Ascending aorta (tissue), 2 donors: ENCODE measurements at regions of chr9 and their contacts with region 1.

Region 1: DNA sequence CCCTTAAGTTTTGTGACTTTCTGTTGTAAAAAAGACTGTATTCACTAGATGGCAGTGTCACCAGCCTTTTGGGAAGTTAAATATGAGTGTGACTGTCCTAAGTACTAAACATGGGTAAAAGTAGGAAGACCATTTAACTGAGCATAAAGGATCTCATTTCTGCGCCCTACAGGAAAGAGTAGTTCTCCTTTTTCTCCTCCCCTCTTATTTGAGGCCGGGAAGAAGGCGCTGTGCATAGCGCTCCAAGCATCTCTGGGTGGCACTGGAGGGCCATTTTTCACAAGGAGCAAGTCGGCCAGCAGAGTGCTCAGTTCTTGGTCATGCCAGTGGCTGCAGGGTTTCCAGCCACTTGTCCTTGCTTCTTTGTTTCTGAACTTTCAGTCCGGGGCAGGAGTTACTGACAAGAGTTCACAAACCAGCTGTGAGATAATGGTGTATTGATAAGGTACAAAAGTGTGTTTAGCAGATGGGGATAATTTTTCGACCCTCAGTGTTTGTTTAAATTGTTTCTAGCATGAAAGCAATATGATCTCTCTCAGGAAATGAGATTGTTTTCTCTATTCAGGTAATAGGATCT is 227.6 kb upstream of the DMRT1 start:
- DNase-seq: peak; percentile 55 to 94
- H3K4me3 ChIP-seq: no peak overlapping the region
- H3K27ac ChIP-seq: peak overlapping the region; percentile 86 to 88
- H3K4me1 ChIP-seq: peaks cover 10 to 25% of the 10 kb centered on the region in 2 donors
- H3K27me3 ChIP-seq: no peaks in the 10 kb centered on the region
- CTCF ChIP-seq: peak; percentile 79 to 88 (median 82)

Region 2: DNA sequence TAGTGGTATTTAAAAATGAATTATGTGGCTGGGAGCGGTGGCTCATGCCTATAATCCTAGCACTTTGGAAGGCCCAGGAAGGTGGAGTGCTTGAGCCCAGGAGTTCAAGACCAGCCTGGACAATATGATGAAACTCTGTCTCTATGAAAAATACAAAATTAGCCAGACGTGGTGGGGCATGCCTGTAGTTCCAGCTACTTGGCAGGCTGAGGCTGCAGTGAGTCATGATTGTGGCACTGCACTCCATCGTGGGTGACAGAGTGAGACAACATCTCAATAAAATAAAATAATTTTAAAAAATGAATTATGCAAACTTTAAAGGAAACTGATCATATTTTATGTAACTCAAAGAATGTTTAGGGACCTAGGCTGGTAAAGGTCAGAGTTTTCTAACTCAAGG is 83.2 kb before region 1 on chr9:
- intact Hi-C with region 1: loop called (anchors 5 kb)
- DNase-seq: peak; percentile 37 to 81
- H3K4me3 ChIP-seq: no peak overlapping the region
- H3K27ac ChIP-seq: peak overlapping the region; percentile 67 to 75
- H3K4me1 ChIP-seq: peaks cover 0 to 34% of the 10 kb centered on the region in 2 donors
- H3K27me3 ChIP-seq: no peaks in the 10 kb centered on the region
- CTCF ChIP-seq: no peak

Region 3: DNA sequence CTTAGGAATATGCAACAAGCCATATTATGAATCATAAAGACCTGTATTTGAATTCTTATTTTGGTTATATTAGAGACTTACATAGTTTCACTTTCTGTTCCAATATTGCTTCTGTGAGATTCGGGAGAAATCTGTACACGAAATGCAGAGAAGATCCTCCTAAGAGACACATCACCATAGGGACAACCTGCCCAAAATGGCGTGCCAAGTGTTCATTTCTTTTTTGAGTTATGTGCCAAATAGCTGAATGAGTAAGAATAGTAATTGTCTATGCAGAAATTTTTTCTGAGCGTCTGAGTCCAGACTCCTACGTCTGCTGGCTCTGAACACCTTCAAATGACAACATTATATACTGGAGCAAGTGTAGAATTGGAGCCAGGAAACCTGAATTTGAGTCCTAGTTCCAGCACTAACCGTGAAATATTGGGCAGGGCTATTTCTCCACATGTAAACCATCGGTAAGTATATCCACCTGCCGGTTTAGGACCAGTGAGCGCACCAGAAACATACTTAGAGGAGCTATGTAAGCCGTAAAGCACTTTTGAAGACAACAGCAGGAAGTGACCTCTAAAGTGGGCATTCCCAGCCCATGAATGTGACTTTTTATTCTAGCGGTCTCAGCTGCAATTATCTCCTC is 63.7 kb after region 1 on chr9:
- intact Hi-C with region 1: no loop called
- DNase-seq: no peak
- H3K4me3 ChIP-seq: peak overlapping the region; percentile 58 to 67
- H3K27ac ChIP-seq: peak overlapping the region; percentile 69 to 82
- H3K4me1 ChIP-seq: peaks cover 0 to 7% of the 10 kb centered on the region in 2 donors
- H3K27me3 ChIP-seq: no peaks in the 10 kb centered on the region
- CTCF ChIP-seq: no peak

Region 4: DNA sequence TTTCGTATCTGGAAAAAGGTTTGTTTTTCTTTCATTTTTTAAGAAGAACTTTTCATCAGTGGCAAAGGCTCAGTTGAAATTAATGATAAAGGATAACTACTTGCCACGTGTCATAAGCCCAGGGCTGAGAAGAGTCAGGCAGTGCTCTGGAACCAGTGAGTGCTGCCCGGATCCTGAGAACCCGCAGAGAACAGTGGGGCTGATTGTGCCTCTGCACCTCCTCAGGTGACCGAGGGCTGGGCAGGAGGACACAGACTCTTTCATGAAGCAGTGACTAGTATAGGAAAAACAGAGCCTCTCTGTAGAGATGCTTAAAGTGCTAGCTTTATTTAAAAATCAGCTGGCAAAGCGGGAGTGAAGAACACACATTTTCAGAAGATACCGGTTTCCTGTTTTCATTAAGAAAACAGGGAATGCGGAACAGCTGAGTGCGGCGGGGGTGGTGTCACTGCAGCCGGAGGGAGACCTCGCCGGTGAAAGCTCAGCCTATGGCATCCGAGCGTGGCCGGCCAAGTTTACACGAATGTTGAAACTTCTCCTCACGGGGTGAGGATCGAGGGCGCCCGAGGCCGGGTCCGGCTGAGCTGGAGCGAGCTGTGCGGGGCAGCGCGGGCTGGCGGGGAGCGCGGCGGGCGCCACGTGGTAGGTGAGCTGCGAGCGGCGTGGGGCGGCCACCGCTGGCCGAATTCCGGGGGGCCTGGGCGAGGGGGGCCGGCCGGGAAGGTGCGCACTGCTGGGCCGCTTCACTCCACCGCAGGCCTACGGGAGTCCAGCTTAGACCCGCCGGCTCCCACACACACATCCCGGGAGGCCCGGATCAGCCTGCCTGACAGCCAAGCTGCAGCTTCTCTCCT is 93.0 kb after region 1 on chr9:
- intact Hi-C with region 1: no loop called
- DNase-seq: peak in 1 of 2 donors; percentile 91
- H3K4me3 ChIP-seq: peak overlapping the region; percentile 69 to 70
- H3K27ac ChIP-seq: peak overlapping the region; percentile 86 to 95
- H3K4me1 ChIP-seq: peaks cover 9 to 67% of the 10 kb centered on the region in 2 donors
- H3K27me3 ChIP-seq: no peaks in the 10 kb centered on the region
- CTCF ChIP-seq: no peak

Region 5: GRCh38 chr9:738209-738915 is 124.5 kb after region 1 on chr9:
- intact Hi-C with region 1: loop called (anchors 5 kb)
- DNase-seq: peak in 1 of 2 donors; percentile 93
- H3K4me3 ChIP-seq: peak overlapping the region in 1 of 2 donors; percentile 39
- H3K27ac ChIP-seq: peak overlapping the region; percentile 92 to 95
- H3K4me1 ChIP-seq: peaks cover 27 to 72% of the 10 kb centered on the region in 2 donors
- H3K27me3 ChIP-seq: no peaks in the 10 kb centered on the region
- CTCF ChIP-seq: no peak

Region 6: DNA sequence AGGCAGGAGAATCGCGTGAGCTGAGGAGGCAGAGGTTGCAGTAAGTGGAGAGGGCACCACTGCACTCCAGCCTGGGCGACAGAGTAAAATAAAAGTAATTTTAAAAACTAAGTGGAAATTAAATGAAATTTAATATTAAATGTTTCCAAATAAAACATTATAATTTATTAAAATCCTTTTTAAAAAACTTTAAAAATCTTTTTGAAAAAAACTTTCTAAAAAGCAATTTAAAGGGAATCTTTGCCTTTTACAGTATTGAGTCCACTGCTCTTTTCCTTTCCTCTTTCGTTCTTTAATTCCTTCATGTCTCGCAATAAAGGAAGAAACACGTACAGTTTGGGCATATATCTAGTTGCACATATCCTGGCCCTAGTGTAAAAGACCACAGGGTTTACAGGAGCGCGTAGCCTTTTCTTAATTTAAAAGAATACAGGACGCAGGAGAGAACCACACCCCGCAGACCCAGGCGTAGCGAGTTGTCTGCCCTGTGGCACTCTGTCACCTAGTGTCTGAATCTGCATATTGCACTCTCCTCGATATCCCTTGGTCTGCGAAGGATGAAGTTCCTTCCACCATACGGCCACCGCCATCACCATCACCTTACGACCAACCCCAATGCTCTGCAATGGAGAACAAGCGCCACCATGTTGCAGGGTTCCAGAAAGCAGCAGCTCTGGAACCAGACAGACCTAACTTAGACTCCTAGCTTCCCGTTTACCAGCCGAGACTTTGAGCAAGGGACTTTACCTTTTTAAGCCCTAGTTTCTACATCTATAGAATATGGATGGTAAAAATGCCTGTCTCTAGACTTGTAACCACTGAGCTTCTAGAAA is 150.0 kb after region 1 on chr9:
- intact Hi-C with region 1: loop called (anchors 1 kb)
- DNase-seq: peak in 1 of 2 donors; percentile 85
- H3K4me3 ChIP-seq: peak overlapping the region in 1 of 2 donors; percentile 41
- H3K27ac ChIP-seq: no peak overlapping the region
- H3K4me1 ChIP-seq: peaks cover 0 to 17% of the 10 kb centered on the region in 2 donors
- H3K27me3 ChIP-seq: no peaks in the 10 kb centered on the region
- CTCF ChIP-seq: peak; percentile 75 to 90 (median 90)

Region 7: GRCh38 chr9:800591-801150 is 186.8 kb after region 1 on chr9:
- intact Hi-C with region 1: no loop called
- DNase-seq: no peak
- H3K4me3 ChIP-seq: no peak overlapping the region
- H3K27ac ChIP-seq: no peak overlapping the region
- H3K4me1 ChIP-seq: peaks cover 0 to 4% of the 10 kb centered on the region in 2 donors
- H3K27me3 ChIP-seq: no peaks in the 10 kb centered on the region
- CTCF ChIP-seq: no peak

Region 8: DNA sequence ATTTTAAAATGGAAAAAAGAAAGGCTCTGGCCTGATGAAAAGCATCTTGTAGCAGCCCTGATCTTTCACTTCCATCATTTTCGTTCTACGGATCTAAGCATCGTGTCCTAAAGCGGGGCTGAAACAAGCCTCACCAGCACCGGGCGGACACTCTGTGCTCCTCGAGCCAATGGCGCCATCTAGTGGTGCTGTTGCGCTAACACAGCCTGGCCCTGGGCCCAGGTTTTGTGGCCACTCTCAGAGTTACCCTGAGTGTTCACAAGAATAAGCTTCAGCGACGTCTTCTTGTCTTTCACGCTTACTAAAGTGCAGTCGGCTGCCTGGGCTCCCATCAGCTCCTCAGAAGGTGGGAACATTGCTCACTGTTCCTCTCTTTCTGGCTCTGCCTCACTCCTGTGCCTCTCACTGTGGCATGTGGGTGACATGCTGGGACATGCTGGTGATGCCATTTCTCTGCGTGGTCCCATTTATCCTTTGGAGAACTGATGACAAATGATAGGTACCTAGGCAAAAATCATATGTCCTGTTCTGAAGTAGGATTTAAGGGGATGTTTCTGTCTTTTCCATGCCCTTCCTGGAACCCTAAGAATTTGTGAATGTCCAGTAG is 395.3 kb after region 1 on chr9:
- intact Hi-C with region 1: loop called (anchors 5 kb)
- DNase-seq: peak; percentile 12 to 87
- H3K4me3 ChIP-seq: no peak overlapping the region
- H3K27ac ChIP-seq: no peak overlapping the region
- H3K4me1 ChIP-seq: no peaks in the 10 kb centered on the region
- H3K27me3 ChIP-seq: no peaks in the 10 kb centered on the region
- CTCF ChIP-seq: peak; percentile 79 to 95 (median 90)